K562 (cell line): ENCODE measurements at regions of chr11 and their contacts with region 1.

Region 1: DNA sequence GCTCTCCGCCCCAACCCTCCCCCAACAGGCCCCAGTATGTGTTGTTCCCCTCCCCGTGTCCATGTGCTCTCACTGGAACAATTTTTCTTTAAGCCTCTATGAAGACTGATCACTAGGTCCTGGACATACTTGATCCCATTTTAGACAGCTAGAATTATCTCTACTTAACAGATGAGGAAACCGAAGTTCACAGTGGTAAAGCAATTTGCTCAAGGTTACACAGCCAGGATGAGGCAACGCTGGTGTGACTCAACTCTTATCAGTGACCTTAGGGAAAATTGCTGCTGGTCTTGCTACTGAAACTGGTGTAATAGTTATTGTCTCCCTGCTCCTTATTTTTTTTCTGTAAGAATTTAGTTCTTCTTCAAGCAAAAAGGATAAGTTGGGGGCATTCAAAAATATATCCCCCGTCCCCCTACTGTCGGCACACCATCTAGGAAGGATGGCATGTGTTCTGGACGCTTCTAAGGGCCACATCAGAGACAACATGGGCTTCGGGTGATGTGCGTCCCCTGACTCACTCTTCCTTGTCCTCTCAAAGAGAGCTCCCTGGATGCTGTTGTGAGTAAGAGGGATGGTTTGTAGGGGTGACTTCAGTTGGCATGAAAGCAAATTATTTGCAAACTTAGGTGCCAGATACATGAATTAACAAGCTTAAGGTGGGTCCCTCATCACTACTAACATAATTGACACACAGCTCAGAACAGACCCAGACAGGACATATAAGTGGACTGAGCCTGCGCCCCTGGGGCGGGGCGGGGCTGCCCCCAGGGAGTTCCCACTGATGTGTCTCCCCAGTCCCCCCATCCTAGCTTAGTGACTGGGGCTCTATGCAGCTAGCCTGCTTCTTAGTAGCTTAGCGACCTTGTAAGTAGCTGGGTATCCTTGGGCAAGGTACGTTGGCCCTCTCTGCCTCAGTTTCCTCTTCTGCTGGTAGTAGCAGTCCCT is 23.6 kb upstream of the ALX4 start:
- DNase-seq: peak; percentile 51 to 93 (median 67)
- ATAC-seq: peak; percentile 89
- H3K4me3 ChIP-seq: no peak overlapping the region
- H3K27ac ChIP-seq: peak overlapping the region; percentile 90
- H3K4me1 ChIP-seq: peaks cover 34 to 49% of the 10 kb centered on the region in 2 experiments
- H3K27me3 ChIP-seq: no peaks in the 10 kb centered on the region
- CTCF ChIP-seq: no peak
- EP300 ChIP-seq: peak; percentile 93
- POLR2A ChIP-seq: no peak
- RAD21 ChIP-seq: peak in 1 of 2 experiments; percentile 35; a peak in 2 of 4 replicates

Region 2: DNA sequence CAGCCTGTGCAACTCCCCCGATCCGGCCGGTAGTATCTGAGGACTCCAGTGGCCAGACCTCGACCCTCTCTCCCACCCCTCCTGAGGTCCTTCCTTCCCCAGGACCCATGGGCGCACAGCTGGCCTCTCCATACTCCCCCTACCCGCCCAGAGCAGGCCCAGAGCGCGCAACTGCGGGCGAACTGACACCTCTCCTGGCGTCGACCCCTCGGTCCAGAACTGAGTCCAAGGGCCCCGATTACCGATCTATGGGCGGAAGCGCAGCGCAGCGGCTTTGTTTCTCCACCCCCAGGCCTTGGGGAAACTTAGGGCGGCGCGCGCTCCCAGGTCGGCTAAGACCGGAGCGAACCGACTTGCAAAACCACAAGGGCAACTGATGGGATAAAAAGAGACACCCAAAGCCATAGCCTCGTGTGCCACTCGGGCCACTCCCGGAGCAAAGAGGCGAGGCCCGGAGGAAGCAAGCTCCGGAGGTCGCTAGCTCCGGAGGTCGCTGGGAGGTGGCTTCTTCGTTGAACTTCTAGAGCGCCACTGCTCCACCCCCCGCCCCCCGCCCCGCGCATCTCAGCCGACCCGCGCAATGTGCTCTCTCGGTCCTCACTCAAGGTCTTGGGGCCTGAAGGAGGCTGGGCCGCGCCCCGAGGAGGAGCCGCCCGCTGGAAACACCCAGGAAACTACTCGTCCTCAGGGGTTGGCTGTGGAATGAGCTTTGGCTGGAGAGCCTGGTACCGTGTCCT is 13.8 kb before region 1 on chr11:
- CTCF ChIA-PET with region 1: no interaction called
- POLR2A ChIA-PET with region 1: interaction called, 4 read pairs
- in situ Hi-C with region 1: no loop called
- intact Hi-C with region 1: loop called (anchors 1 kb)
- DNase-seq: peak; percentile 47 to 72 (median 56)
- ATAC-seq: peak; percentile 83
- H3K4me3 ChIP-seq: peak overlapping the region; percentile 14
- H3K27ac ChIP-seq: no peak overlapping the region; the same call in 2 of the 3 replicates
- H3K4me1 ChIP-seq: peaks cover 21 to 29% of the 10 kb centered on the region in 2 experiments
- H3K27me3 ChIP-seq: peaks cover 11 to 53% of the 10 kb centered on the region in 2 experiments; a peak in 4 of 5 replicates
- CTCF ChIP-seq: no peak
- EP300 ChIP-seq: no peak
- POLR2A ChIP-seq: no peak
- RAD21 ChIP-seq: no peak